ENCODE measurements at regions of chr15 and their contacts with region 1.

Region 1: DNA sequence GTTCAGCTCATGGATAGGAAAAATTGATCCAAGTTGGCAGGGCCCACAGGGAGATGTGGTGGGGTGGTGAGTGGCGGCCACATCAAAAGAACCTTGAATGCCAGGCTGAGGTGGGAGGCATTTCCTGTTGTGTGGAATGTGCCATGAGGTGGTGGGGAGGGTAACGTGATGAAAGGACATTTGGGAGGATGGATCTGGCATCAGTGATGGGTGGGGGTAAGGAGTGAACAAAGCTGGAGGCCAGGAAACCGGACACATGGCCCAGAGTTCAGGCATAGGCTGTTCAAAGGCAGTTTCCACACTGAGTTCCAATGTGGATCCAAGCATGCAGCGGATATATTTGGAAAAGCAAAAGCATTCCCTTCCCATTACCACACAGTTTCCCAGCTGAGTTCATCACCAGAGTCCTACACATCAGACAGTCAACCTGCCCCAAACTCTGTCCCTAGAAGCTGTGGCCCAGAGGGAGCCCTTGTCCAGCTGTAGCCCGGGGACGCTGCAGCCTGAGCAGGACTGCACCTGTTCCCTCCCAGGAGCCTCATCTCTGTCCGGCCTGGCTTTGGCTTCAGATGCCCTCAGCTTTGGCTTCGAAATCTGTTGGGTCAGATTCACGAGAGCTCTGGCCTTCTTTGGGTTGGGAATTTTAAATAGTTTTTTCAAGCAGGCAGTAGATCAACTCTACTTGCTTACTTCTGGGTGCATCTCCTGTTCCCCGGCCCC is 37.8 kb upstream of the GOLGA6B start:
- DNase-seq: no peak
- H3K4me3 ChIP-seq: no peak overlapping the region
- H3K27ac ChIP-seq: no peak overlapping the region
- H3K4me1 ChIP-seq: no peaks in the 10 kb centered on the region
- H3K27me3 ChIP-seq: no peaks in the 10 kb centered on the region
- CTCF ChIP-seq: no peak
- EP300 ChIP-seq: no peak
- POLR2A ChIP-seq: no peak

Region 2: GRCh38 chr15:72312605-72313447 is 303.8 kb before region 1 on chr15:
- intact Hi-C with region 1: no loop called
- DNase-seq: peak; percentile 61 to 83
- H3K4me3 ChIP-seq: no peak overlapping the region
- H3K27ac ChIP-seq: no peak overlapping the region
- H3K4me1 ChIP-seq: no peaks in the 10 kb centered on the region
- H3K27me3 ChIP-seq: no peaks in the 10 kb centered on the region
- CTCF ChIP-seq: peak in 5 of 7 experiments; percentile 34 to 72 (median 54)
- EP300 ChIP-seq: no peak
- POLR2A ChIP-seq: no peak

Region 3: GRCh38 chr15:72671535-72671934 is 54.9 kb after region 1 on chr15:
- intact Hi-C with region 1: loop called (anchors 10 kb)
- DNase-seq: no peak
- H3K4me3 ChIP-seq: no peak overlapping the region
- H3K27ac ChIP-seq: no peak overlapping the region
- H3K4me1 ChIP-seq: peaks cover 0 to 6% (median 5%) of the 10 kb centered on the region in 4 donors
- H3K27me3 ChIP-seq: peaks cover 0 to 38% (median 6%) of the 10 kb centered on the region in 3 donors
- CTCF ChIP-seq: no peak
- EP300 ChIP-seq: no peak
- POLR2A ChIP-seq: no peak